ENCODE measurements at regions of chr13 and their contacts with region 1.

Region 1: GRCh38 chr13:99436686-99437416 is 64.4 kb upstream of the TM9SF2 start:
- DNase-seq: peak; percentile 88
- H3K4me3 Mint-ChIP-seq: peak overlapping the region; percentile 40
- H3K27ac Mint-ChIP-seq: peak overlapping the region; percentile 65
- H3K4me1 Mint-ChIP-seq: peaks cover 60% of the 10 kb centered on the region
- H3K27me3 Mint-ChIP-seq: peaks cover 29% of the 10 kb centered on the region

Region 2: GRCh38 chr13:98576963-98577822 is 859.7 kb before region 1 on chr13 and contains the start of gene STK24:
- intact Hi-C with region 1: loop called (anchors 10 kb)
- DNase-seq: peak; percentile 66
- H3K4me3 Mint-ChIP-seq: peak within 1 kb of the TSS; percentile 98
- H3K27ac Mint-ChIP-seq: peak within 1 kb of the TSS; percentile 86
- H3K4me1 Mint-ChIP-seq: peaks cover 45% of the 10 kb centered on the region
- H3K27me3 Mint-ChIP-seq: no peaks in the 10 kb centered on the region
- total RNA-seq, gene STK24: 135 and 139 TPM in 2 replicates

Region 3: DNA sequence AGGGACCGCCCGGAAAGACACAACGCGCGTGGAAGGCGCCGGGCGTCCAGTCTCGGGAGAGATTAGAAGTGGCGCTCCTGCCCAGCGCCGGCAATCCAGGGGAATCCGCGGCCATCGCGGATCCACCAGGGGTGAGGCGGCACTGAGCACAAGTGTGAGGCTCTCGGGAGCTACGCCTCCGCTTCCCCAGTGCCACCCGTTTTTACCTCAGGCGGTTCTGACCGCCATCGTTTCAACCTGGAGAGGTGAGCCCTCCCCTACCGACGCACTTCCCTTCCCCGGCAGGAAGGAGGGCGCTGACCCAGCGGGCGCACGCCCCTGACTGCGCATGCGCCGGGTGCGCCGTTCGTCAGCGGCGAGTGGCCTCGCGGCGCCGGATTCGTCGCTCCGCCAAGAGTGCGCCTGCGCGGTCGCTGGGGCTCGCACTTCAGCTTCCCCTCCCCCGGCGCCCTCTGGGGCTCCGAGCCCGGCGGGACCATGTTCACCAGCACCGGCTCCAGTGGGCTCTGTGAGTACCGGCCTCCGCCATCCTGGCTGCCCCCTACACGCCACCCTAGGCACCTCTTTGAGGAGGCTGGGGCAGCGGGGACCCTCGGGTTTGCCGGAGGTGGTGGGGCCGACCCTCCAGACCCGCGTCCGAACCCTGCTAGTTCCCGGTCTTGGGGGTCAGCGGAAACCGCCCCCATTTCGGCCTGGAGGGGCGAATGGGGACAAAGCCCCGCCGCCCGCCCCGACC is 236.3 kb before region 1 on chr13 and contains the start of gene UBAC2:
- intact Hi-C with region 1: loop called (anchors 2 kb)
- DNase-seq: peak; percentile 97
- H3K4me3 Mint-ChIP-seq: peak within 1 kb of the TSS; percentile 98
- H3K27ac Mint-ChIP-seq: peak within 1 kb of the TSS; percentile 96
- H3K4me1 Mint-ChIP-seq: peaks cover 65% of the 10 kb centered on the region
- H3K27me3 Mint-ChIP-seq: no peaks in the 10 kb centered on the region
- total RNA-seq, gene UBAC2: 52.1 and 56.3 TPM in 2 replicates

Region 4: DNA sequence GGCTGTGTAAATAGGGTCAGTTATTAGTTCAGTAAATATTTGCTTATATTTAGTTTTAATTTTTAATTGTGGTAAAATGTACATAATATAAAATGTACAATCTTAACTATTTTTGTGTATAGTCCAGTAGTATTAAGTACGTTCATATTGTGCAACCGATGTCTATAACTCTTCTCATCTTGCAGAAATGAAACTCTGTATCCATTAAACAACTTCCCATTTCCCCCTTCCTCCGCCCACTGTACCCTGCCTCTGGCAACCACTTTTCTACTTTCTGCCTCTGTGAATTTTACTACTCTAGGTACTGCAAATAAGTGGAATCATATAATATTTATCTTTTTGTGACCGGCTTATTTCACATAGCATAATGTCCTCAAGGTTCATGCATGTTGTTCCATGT is 211.8 kb before region 1 on chr13:
- intact Hi-C with region 1: no loop called
- DNase-seq: no peak
- H3K4me3 Mint-ChIP-seq: no peak overlapping the region
- H3K27ac Mint-ChIP-seq: no peak overlapping the region
- H3K4me1 Mint-ChIP-seq: peaks cover 92% of the 10 kb centered on the region
- H3K27me3 Mint-ChIP-seq: no peaks in the 10 kb centered on the region

Region 5: DNA sequence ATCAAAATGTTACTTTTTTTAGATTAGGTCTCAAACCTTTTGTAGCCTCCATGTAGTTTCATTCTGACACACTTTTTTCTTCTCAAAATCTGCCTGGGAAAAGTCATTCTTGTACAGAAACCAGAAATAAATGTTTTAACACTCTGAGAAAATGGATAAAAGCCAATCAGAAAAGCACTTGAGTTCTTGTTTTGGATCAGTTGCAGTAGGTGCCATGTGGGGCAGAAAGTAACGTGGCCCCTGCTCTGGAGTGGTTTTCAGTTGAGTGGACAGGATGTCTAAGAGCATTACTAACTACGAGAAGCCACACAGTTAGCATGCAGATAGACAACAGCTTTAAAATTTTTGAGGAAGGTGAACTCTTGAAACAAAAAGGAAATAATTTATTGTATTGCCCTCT is 148.8 kb before region 1 on chr13:
- intact Hi-C with region 1: loop called (anchors 1 kb)
- DNase-seq: no peak
- H3K4me3 Mint-ChIP-seq: peak overlapping the region; percentile 6
- H3K27ac Mint-ChIP-seq: peak overlapping the region; percentile 50
- H3K4me1 Mint-ChIP-seq: peaks cover 61% of the 10 kb centered on the region
- H3K27me3 Mint-ChIP-seq: no peaks in the 10 kb centered on the region

Region 6: GRCh38 chr13:99356158-99357091 is 80.4 kb before region 1 on chr13:
- intact Hi-C with region 1: loop called (anchors 1 kb)
- DNase-seq: peak; percentile 74
- H3K4me3 Mint-ChIP-seq: peak overlapping the region; percentile 62
- H3K27ac Mint-ChIP-seq: peak overlapping the region; percentile 95
- H3K4me1 Mint-ChIP-seq: peaks cover 99% of the 10 kb centered on the region
- H3K27me3 Mint-ChIP-seq: peaks cover 3% of the 10 kb centered on the region

Region 7: GRCh38 chr13:99606324-99607066 is 169.6 kb after region 1 on chr13:
- intact Hi-C with region 1: loop called (anchors 1 kb)
- DNase-seq: peak; percentile 82
- H3K4me3 Mint-ChIP-seq: peak within 1 kb of the TSS; percentile 89
- H3K27ac Mint-ChIP-seq: peak within 1 kb of the TSS; percentile 81
- H3K4me1 Mint-ChIP-seq: peaks cover 29% of the 10 kb centered on the region
- H3K27me3 Mint-ChIP-seq: peaks cover 4% of the 10 kb centered on the region

Region 8: GRCh38 chr13:99935777-99936176 is 498.9 kb after region 1 on chr13:
- intact Hi-C with region 1: no loop called
- DNase-seq: no peak
- H3K4me3 Mint-ChIP-seq: no peak overlapping the region
- H3K27ac Mint-ChIP-seq: no peak overlapping the region
- H3K4me1 Mint-ChIP-seq: no peaks in the 10 kb centered on the region
- H3K27me3 Mint-ChIP-seq: peaks cover 23% of the 10 kb centered on the region

Region 9: DNA sequence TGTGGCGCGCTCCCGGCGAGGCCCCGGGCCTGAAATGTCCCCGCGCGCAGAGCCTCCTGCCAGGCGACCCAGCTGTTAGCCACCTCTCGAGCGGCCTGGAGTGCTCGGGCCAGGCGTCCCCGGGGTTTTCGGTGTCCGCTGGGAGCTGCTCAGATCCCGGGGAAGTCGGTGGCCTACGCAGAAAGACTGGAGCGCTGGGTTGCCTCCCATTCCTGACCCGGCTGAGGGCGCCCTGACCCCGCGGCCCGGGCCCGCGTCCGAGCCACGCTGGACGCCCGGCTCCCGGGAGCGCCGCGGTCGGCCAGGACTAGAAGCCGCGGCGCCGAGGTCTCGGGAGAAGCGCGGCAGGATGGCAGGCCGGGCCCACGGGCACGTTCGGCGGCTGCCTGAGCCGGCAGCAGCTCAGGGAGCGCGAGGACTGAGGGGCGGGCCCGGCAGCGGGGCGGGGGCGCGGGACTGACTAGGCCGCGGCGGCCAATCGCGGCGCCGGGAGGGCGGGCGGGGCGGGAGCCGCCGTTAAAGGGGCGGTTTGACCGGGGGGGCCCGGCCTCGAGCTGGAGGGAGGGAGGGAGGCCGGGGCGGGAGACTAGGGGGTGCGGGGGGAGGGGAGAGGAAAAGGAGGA is 543.5 kb after region 1 on chr13:
- intact Hi-C with region 1: no loop called
- DNase-seq: peak; percentile 49
- H3K4me3 Mint-ChIP-seq: no peak overlapping the region
- H3K27ac Mint-ChIP-seq: no peak overlapping the region
- H3K4me1 Mint-ChIP-seq: peaks cover 16% of the 10 kb centered on the region
- H3K27me3 Mint-ChIP-seq: peaks cover 65% of the 10 kb centered on the region